Vagina (tissue), 2 donors: ENCODE measurements at regions of chr6 and their contacts with region 1.

Region 1: DNA sequence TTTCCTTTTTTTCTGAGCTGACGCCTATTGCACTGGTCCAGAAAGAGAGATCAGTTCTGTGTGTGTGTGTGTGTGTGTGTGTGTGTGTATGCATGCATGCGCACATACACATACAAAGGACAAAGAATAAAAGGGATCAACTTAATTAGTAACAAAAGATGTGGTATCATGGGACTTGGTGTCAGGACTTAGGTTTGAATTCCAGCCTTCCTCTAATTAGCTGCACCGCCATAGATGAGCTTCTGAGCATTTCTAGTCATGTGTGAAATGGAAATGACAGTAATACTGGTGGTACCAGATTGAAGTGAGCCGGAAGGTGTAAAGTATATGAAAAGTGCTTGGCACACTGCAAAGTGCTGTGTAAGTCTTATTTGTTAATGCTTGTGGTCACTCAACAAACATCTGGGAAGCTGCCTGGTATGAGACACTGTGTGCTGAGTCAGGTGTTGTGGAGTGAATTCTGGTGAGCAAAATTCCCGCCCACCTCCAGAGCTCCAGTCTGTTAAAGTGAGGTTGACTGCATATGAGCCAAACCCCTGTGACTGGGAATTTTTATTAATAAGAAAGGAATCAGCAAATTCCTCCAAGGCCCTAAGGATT is 12.4 kb downstream of the DAAM2 start:
- DNase-seq: peak in 1 of 2 donors; percentile 64
- H3K4me3 ChIP-seq: no peak overlapping the region
- H3K27ac ChIP-seq: no peak overlapping the region
- H3K4me1 ChIP-seq: peaks cover 15% of the 10 kb centered on the region
- H3K27me3 ChIP-seq: no peaks in the 10 kb centered on the region
- CTCF ChIP-seq: no peak
- POLR2A ChIP-seq: no peak

Region 2: DNA sequence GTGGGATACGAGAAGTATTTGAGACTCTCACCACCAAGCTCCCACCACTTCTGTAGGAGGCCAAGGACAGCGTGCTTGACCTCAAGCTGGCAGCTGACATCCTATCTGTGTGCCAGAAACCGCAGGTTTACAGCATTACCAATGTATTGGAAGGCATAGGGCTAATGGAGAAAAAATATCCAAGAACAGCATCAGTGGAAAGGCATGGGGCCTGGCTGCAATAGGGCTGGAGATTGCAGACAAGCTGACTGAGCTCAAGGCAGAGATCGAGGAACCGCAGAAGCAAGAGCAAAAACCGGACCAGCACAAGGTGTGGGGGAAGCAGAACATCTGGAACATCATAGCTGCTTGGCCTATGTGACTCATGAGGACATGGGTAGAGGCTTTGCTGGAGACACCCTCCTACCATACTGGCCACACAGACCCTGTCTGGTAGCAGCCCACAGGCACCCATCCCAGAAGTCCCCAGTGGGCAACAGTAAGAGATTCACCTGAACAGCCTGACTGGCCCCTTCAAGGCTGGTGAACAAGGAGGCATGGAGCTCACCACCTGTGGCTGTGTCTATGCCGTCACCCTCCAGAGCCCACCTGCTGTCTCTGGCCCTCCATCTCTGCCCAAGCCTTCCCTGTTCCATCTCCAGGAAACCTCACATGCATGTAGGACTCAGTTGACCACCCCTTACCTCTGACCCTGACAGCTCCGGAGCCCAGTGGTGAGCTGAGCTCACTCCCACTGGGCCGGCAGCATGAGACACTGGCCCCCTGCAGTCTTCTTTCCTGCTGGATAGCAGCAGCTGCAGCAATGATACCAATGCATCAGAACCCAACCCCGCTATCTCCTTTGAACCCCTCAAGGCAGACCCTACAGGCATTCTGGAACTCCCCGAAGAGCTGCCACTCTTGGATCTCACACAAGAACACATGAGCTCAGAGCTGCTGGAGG is 250.4 kb before region 1 on chr6:
- intact Hi-C with region 1: no loop called
- DNase-seq: no peak
- H3K4me3 ChIP-seq: no peak overlapping the region
- H3K27ac ChIP-seq: no peak overlapping the region
- H3K4me1 ChIP-seq: peaks cover 7% of the 10 kb centered on the region
- H3K27me3 ChIP-seq: no peaks in the 10 kb centered on the region
- CTCF ChIP-seq: no peak
- POLR2A ChIP-seq: no peak

Region 3: GRCh38 chr6:39850736-39851297 is 46.3 kb after region 1 on chr6:
- intact Hi-C with region 1: loop called (anchors 10 kb)
- DNase-seq: no peak
- H3K4me3 ChIP-seq: no peak overlapping the region
- H3K27ac ChIP-seq: no peak overlapping the region
- H3K4me1 ChIP-seq: peaks cover 30% of the 10 kb centered on the region
- H3K27me3 ChIP-seq: no peaks in the 10 kb centered on the region
- CTCF ChIP-seq: no peak
- POLR2A ChIP-seq: no peak